ENCODE measurements at regions of chr7 and their contacts with region 1.

Region 1: DNA sequence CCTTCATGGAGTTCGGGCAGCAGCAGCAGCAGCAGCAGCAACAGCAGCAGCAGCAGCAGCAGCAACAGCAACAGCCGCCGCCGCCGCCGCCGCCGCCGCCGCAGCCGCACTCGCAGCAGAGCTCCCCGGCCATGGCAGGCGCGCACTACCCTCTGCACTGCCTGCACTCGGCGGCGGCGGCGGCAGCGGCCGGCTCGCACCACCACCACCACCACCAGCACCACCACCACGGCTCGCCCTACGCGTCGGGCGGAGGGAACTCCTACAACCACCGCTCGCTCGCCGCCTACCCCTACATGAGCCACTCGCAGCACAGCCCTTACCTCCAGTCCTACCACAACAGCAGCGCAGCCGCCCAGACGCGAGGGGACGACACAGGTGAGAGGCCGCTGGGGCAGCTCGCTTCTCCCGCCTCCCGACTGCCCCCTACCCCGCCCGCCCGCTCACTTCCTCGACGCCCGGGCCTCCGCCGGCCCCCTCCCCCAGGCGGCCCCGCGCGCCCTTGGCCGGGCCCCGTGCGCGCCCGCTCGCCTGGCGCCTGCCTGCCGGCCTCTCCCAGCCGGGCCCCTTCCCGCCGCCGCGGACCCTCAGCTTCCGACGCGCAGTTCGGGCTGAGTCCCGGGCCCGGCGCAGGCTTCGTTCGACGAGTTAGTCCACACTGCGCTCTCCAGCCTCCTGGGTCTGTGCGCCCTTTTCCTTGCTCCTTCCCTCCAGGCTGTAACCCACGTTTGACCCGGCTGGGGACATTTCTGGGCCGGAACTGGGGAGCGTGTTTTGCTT is 873 bp downstream of the DLX6 start:
- DNase-seq: peak in 3 of 5 donors; percentile 40 to 58 (median 52)
- H3K4me3 ChIP-seq: peak overlapping the region; percentile 18
- H3K27ac ChIP-seq: peak overlapping the region in 1 of 2 donors; percentile 39
- H3K4me1 ChIP-seq: peaks cover 4% of the 10 kb centered on the region
- H3K27me3 ChIP-seq: peaks cover 5% of the 10 kb centered on the region
- CTCF ChIP-seq: no peak
- EP300 ChIP-seq: no peak
- POLR2A ChIP-seq: no peak

Region 2: DNA sequence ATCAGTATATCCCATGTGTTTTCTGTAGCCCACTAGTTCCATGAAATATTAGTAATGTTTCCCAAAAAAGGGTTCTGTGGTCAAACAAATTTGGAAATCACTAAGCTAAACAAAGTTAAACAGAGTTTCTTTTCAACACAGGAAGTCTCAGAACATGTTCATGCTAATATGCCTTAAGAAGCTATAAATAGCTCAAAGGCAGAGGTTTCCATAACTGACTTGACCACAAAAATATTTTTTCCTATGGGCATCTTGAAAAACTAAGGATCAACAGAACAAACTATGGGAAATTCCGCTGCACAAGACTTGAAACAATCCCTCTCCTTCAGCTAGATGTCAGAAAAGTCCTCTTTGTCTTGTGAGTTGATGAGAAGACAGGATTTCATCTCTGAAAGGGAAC is 356.2 kb before region 1 on chr7:
- intact Hi-C with region 1: no loop called
- DNase-seq: no peak
- H3K4me3 ChIP-seq: no peak overlapping the region
- H3K27ac ChIP-seq: no peak overlapping the region
- H3K4me1 ChIP-seq: no peaks in the 10 kb centered on the region
- H3K27me3 ChIP-seq: no peaks in the 10 kb centered on the region
- CTCF ChIP-seq: no peak
- EP300 ChIP-seq: no peak
- POLR2A ChIP-seq: no peak

Region 3: DNA sequence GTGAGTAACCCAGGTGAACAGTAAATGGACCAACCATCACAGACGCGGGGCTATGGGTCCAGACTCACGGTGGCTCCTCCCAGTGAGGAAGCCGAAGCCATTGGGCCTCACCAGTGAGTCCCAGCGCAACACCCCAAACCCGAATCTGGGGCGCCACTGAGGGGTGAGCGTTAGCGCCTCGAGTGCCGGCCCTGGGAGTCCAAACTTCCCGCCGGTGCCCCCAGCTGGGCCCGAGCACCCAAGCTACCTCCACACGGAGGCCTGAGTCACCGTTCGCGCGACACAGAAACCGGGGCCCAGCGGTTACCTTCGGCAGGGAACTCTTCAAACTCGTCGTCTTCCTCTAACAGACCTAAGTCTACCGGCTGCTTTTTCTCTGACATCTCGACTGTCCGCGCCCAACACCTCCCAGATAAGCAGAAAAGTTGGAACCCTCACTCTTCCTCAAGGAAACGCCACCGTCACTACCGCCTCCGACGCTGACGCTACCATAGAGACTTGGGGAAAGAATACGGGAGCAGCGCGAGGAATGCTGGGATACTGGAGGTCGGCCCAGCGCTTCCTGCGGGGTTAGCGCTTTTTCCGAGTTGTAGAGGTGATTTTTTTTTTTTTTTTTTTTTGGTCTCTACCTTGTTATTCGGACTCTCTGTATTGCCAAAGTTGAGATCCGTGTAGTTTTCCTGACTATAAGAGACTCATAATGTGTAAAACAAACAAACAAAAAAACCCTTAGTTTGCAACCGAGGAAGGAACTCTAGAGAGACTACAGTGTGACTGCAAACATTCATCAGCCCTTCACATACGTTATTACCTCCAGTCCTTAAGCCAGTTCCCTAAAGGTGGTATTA is 296.6 kb before region 1 on chr7 and contains the start of gene SEM1:
- intact Hi-C with region 1: loop called in 1 of 4 experiments (anchors 10 kb)
- DNase-seq: peak; percentile 82 to 90 (median 86)
- H3K4me3 ChIP-seq: peak within 1 kb of the TSS; percentile 98
- H3K27ac ChIP-seq: peak within 1 kb of the TSS; percentile 46 to 51
- H3K4me1 ChIP-seq: peaks cover 7% of the 10 kb centered on the region
- H3K27me3 ChIP-seq: no peaks in the 10 kb centered on the region
- CTCF ChIP-seq: no peak
- EP300 ChIP-seq: no peak
- POLR2A ChIP-seq: peak; percentile 51
- total RNA-seq, gene SEM1: 20.5 to 50.6 (median 45.2) TPM

Region 4: DNA sequence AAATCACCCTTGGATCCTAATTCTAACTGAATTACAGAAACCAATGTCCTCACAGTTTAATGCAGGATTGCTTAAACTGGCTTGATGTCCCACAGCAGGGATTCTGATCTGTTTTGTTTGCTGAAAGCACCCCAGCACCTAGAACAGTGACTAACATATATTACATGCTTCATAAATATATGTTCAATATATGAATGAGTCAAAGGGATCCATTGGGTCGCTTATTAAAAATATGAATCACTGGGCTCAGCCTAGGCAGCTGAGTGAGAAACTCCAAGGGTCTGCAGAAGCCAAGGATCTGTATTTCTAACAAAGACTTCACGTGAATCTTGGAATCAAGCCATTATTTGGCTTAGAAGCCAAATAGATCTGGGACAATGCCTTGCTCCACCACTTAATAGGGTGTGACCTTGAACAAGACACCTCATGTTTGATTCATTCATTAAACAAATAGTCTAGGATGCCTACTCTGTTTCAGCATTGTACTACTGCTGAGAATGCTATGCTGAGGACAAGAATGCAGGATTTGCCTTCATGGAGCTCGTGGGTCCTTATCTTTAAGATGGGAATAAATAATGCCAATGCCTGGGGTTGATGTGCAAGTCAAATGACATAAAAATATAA is 104.3 kb before region 1 on chr7:
- intact Hi-C with region 1: no loop called
- DNase-seq: no peak
- H3K4me3 ChIP-seq: no peak overlapping the region
- H3K27ac ChIP-seq: no peak overlapping the region
- H3K4me1 ChIP-seq: no peaks in the 10 kb centered on the region
- H3K27me3 ChIP-seq: no peaks in the 10 kb centered on the region
- CTCF ChIP-seq: no peak
- EP300 ChIP-seq: no peak
- POLR2A ChIP-seq: no peak